Left ventricle myocardium superior (tissue), 1 donor: ENCODE measurements at regions of chr9 and their contacts with region 1.

Region 1: DNA sequence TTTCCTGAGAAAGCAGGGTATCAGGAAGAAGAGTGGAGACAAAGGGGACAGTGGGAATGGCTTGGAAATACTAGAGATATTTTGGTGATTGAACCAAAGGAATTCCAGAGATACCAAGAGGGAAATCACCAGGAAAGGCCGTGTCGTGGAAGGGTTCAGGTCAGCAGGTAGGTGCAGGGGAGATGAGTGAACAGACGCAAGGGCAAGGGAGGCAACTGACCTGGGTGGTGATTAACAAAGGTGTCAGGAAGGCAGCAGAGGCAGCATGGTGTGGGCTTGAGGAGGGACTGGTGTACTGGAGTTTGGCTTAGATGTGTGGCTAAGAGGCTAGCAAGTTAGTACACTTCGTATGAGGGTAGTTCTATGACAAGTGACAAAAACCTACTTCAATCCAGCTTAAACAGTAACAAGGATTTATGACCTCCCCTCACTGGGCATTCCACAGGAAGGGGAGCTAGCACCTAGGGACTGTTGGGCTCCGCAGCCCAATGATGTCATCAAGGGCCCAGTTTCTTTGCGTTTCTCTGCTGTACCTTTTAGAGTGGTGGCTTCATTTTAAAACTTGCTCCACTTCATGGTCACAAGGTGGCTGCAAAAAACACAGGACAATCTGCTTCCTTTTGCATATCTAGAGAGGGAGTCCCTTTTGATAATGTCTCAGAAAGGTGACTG is 37.0 kb downstream of the INIP start:
- DNase-seq: no peak
- ATAC-seq: no peak

Region 2: GRCh38 chr9:112348257-112349007 is 332.4 kb before region 1 on chr9:
- intact Hi-C with region 1: loop called (anchors 5 kb)
- DNase-seq: peak; percentile 94
- ATAC-seq: peak; percentile 88